Transverse colon (tissue), 4 donors: ENCODE measurements at regions of chr1 and their contacts with region 1.

Region 1: DNA sequence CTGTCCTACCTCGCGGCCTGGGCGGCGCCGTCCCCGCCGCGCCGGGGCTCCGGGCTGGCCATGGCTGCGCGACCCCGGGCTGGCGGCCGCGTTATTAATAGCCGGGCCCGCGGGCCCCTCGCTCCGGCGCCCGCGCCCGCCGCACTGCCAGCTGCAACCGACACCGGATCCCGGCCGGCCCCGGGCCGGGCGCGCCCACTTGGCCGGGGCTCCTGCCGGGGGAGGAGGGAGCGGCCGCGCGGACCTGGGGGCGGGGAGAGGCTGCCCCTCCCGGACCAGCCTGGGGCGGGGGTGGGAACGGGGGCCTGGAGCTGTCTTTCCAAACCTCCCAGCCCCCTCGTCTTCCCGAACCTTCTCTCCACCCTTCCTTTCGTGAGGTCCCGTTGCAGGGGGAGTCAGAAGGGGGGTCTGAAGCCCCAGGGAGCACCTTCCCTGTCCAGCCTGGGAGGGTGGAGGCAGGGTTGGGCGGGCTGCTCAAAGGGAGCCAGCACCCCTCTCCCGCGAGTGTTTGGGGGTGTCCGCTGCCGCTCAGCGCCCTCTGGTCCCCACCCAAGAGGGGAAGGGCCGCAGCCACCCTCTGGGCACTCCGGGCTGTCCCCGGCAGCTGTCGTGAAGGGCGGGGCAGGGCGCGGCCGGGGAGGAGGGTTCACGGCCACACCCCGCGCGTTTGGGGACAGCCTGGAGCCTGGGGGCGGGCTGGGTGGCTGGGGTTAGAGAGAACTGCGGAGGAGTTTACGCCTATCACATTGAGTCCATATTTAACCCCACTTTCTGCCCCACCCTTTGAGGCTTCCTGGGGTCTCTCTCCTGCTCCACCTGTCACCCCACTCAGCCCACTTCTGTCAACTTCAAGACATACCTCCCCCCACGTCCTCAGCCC is at the start of gene SYNC:
- DNase-seq: peak; percentile 93
- H3K4me3 ChIP-seq: peak within 1 kb of the TSS; percentile 61 to 71 (median 66)
- H3K27ac ChIP-seq: peak within 1 kb of the TSS; percentile 87 to 92 (median 90)
- H3K4me1 ChIP-seq: peaks cover 23 to 36% (median 27%) of the 10 kb centered on the region in 4 donors
- H3K27me3 ChIP-seq: no peaks in the 10 kb centered on the region
- CTCF ChIP-seq: no peak
- EP300 ChIP-seq: no peak
- POLR2A ChIP-seq: peak; percentile 72
- total RNA-seq, gene SYNC: 24.9 to 95.5 (median 43.8) TPM

Region 2: DNA sequence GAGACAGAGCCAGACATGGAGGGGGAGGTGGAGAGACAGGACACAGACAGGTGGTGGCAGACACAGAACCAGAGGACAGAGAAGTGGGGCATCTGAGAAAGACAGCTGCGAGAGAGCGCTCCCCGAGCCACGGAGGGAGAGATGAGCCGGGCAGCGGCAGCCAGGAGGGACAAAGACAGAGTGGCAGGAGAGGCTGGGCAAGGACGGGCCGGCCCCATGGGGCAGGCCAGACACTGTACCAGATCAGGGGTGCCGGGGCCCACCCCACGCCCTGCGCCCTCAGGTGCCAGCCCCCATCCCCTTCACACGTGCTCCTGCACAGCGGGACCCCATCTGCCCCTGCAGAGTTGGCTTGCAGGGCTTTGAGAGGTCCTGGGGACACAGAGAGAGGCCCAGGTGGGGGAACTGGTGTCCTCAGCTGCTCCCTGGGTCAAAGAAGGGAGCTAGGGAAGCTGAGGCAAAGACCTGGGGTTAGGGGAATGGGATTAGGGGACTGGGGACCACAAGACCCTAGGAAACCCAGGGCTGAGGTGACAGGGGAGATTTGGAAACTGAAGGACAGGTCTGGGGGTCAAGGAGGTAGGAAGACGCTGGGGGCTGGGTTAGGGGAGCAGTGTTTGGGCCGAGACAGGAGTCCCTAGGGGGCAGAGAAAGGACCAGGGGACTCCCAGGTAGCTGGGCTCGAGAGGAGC is 167.2 kb after region 1 on chr1:
- in situ Hi-C with region 1: loop called in 1 of 4 experiments (anchors 10 kb)
- intact Hi-C with region 1: no loop called
- DNase-seq: no peak
- H3K4me3 ChIP-seq: peak overlapping the region in 2 of 4 donors; percentile 26 to 51
- H3K27ac ChIP-seq: no peak overlapping the region
- H3K4me1 ChIP-seq: peaks cover 5 to 29% (median 15%) of the 10 kb centered on the region in 4 donors
- H3K27me3 ChIP-seq: peaks cover 34% of the 10 kb centered on the region
- CTCF ChIP-seq: no peak
- EP300 ChIP-seq: no peak
- POLR2A ChIP-seq: no peak